ENCODE measurements at regions of chr7 and their contacts with region 1.

Region 1: GRCh38 chr7:149355390-149356048 is 93.5 kb downstream of the ZNF783 start:
- DNase-seq: peak; percentile 93 to 95
- H3K4me3 ChIP-seq: peak overlapping the region; percentile 38; the same call in 1 of the 2 replicates
- H3K27ac ChIP-seq: peak overlapping the region; percentile 58
- H3K4me1 ChIP-seq: peaks cover 23% of the 10 kb centered on the region
- H3K27me3 ChIP-seq: no peaks in the 10 kb centered on the region
- CTCF ChIP-seq: peak; percentile 53; the same call in 1 of the 2 replicates

Region 2: GRCh38 chr7:148380596-148381419 is 974.7 kb before region 1 on chr7:
- CTCF ChIA-PET with region 1: no interaction called
- POLR2A ChIA-PET with region 1: no interaction called
- intact Hi-C with region 1: no loop called
- DNase-seq: no peak
- H3K4me3 ChIP-seq: no peak overlapping the region
- H3K27ac ChIP-seq: no peak overlapping the region
- H3K4me1 ChIP-seq: no peaks in the 10 kb centered on the region
- H3K27me3 ChIP-seq: peaks cover 65% of the 10 kb centered on the region
- CTCF ChIP-seq: no peak

Region 3: DNA sequence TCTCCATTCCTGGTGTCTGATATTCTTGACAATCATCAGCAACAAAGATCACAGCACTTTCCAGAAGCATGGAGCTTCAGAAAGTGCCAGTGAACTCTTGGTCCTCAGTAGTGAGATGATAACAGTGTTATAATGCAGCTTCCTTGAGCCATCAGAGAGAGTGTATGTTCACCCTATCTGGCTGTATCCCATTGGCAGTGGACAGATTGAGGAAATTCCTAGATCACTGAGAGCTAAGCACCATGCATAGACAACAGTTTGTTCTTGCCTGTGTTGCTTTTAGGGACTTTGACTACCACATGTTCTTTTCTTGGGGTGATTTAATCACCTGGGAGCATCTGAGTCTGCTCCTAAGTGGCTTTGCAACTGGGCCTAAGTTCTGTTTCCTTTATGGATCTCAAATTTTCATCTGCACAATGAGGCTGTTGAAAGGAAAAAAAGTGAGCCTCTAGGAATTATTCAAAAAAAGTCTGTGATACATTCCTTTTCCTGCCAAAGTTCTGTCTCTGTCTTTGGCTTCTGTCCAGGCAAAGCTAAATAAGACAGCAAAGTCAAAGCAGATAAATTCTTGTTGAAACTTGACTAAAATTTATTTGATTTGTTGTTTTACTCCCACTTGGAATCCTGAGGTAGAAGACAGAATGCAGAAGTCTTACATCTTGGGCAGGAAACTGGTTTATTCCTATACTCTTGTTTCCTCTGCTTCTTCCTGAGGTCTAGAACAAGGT is 174.6 kb before region 1 on chr7:
- CTCF ChIA-PET with region 1: no interaction called
- POLR2A ChIA-PET with region 1: no interaction called
- intact Hi-C with region 1: no loop called
- DNase-seq: no peak
- H3K4me3 ChIP-seq: no peak overlapping the region
- H3K27ac ChIP-seq: no peak overlapping the region
- H3K4me1 ChIP-seq: no peaks in the 10 kb centered on the region
- H3K27me3 ChIP-seq: no peaks in the 10 kb centered on the region
- CTCF ChIP-seq: no peak

Region 4: GRCh38 chr7:149261829-149262617 is 93.5 kb before region 1 on chr7 and contains the start of gene ZNF783:
- CTCF ChIA-PET with region 1: interaction called, 3 read pairs
- POLR2A ChIA-PET with region 1: no interaction called
- intact Hi-C with region 1: loop called (anchors 1 kb)
- DNase-seq: peak; percentile 74 to 90
- H3K4me3 ChIP-seq: peak within 1 kb of the TSS; percentile 89
- H3K27ac ChIP-seq: peak within 1 kb of the TSS; percentile 74
- H3K4me1 ChIP-seq: peaks cover 16% of the 10 kb centered on the region; the same call in 1 of the 2 replicates
- H3K27me3 ChIP-seq: no peaks in the 10 kb centered on the region
- CTCF ChIP-seq: peak; percentile 68
- total RNA-seq, gene ZNF783: 15.8 and 22.2 TPM in 2 replicates

Region 5: DNA sequence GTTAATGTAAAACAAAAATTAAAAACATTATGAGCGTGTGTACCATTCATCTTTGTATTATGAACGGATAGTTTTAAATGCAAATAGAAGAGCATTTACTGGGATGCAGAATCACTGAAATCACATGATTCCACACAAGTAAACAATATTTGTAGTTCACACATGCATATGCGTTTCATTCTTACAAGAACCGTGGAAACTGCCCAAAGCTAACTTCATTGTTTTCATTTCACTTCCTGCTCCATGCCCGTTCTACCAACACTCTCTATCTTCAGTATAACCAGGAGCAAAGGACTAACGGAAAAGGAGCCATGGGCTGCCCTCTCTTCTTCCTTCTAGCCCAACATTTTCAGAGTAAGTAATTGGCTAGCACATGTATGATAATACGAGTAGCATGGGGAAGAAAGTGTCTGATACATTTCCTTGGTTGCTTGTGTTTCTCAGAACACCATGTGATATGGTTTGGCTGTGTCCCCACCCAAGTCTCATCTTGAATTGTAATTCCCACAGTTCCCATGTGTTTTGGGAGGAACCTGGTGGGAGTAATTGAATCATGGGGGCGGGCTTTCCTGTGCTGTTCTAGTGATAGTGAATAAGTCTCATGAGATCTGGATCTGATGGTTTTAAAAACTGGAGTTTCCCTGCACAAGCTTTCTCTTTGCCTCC is 54.8 kb before region 1 on chr7:
- CTCF ChIA-PET with region 1: no interaction called
- POLR2A ChIA-PET with region 1: no interaction called
- intact Hi-C with region 1: loop called (anchors 5 kb)
- DNase-seq: no peak
- H3K4me3 ChIP-seq: no peak overlapping the region
- H3K27ac ChIP-seq: no peak overlapping the region
- H3K4me1 ChIP-seq: no peaks in the 10 kb centered on the region
- H3K27me3 ChIP-seq: no peaks in the 10 kb centered on the region
- CTCF ChIP-seq: no peak

Region 6: DNA sequence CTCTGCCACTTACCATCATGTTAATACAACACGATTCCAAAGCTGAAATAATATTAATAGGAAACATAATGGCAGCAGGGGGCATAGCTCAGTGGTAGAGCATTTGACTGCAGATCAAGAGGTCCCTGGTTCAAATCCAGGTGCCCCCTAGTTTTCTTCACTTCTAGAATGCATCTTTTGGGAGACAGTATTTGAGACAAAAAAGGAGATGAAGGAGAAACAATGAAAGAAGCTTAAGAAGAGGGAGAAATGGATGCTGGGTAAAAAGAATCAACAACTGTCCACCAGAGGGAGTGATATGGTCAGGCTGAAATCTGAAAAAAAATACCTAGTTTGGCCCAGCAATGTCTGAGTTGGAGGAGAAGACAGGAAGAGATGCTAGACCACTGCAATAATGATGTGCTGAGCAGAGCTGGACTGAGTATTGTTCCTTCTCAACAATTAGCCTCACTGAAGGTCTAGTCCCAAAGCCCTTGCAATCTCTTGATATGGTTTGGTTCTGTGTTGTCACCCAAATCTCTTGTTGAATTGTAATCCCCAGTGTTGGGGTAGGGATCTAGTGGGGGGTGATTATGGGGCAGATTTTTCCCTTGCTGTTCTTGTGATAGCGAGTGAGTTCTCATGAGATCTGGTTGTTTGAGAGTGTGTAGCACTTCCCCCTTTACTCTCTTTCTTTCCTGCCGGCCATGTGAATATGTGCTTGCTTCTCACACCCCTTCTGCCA is 45.2 kb before region 1 on chr7:
- CTCF ChIA-PET with region 1: interaction called, 15 read pairs
- POLR2A ChIA-PET with region 1: interaction called, 12 read pairs
- intact Hi-C with region 1: loop called (anchors 1 kb)
- DNase-seq: peak; percentile 36 to 78
- H3K4me3 ChIP-seq: no peak overlapping the region
- H3K27ac ChIP-seq: no peak overlapping the region
- H3K4me1 ChIP-seq: no peaks in the 10 kb centered on the region
- H3K27me3 ChIP-seq: no peaks in the 10 kb centered on the region
- CTCF ChIP-seq: peak; percentile 77

Region 7: GRCh38 chr7:149369508-149369907 is 14.0 kb after region 1 on chr7:
- CTCF ChIA-PET with region 1: no interaction called
- POLR2A ChIA-PET with region 1: no interaction called
- intact Hi-C with region 1: loop called (anchors 1 kb)
- DNase-seq: peak; percentile 65 to 98
- H3K4me3 ChIP-seq: peak overlapping the region; percentile 31; the same call in 1 of the 2 replicates
- H3K27ac ChIP-seq: peak overlapping the region; percentile 41
- H3K4me1 ChIP-seq: peaks cover 41% of the 10 kb centered on the region
- H3K27me3 ChIP-seq: no peaks in the 10 kb centered on the region
- CTCF ChIP-seq: no peak

Measured in PC-9 (cell line).